ENCODE measurements at regions of chr2 and their contacts with region 1.

Region 1: GRCh38 chr2:71306762-71307161 is 24.8 kb upstream of the ZNF638 start:
- DNase-seq: no peak
- H3K4me3 ChIP-seq: no peak overlapping the region
- CTCF ChIP-seq: no peak

Region 2: GRCh38 chr2:71331581-71332434 is 25.0 kb after region 1 on chr2 and contains the start of gene ZNF638:
- CTCF ChIA-PET with region 1: interaction called, 16 read pairs
- POLR2A ChIA-PET with region 1: no interaction called
- DNase-seq: peak; percentile 16
- H3K4me3 ChIP-seq: peak within 1 kb of the TSS; percentile 99
- CTCF ChIP-seq: peak; percentile 62

Measured in AG04449 (cell line).